ENCODE measurements at regions of chr6 and their contacts with region 1.

Region 1: DNA sequence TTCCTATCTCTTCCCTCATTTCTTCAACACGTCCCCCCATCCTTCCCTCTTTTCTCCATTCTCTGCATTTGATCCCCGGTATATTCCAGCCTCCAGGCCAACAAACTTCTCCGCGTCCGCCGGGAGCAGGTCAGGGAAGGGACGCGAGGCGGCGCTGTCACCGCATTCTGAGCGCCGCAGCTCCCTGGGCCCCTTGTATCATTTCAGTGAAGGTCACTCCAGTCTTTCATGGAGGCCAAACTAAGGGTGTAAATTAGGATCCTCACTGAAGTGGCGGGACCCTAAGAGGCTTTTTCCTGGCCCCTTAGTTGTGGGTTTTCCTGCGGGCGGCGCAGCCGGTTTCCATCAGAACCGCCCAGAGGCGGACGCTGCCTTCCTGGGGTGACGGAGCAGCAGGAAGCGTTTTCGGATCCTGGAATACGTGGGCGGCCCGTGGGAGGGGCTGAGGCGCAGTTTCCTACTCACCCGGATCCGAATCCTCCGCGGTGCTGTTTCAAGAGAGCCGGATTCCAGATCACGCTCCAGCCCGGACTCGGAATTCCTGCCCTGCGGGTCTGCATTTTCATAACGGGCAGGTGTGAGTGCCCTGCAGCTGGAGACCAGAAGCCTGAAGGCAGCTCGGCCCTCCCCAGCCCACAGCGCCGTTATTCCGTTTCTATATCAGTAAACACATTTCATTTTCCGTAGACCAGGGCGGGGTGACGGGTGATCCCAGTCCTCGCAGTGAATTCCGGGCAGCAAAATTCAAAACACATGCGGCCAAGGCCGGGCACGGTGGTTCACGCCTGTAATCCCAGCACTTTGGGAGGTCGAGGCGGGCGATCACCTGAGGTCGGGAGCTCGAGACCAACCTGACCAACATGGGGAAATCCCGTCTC is 3.6 kb upstream of the MICA start:
- DNase-seq: peak; percentile 85
- H3K27ac ChIP-seq: peak overlapping the region; percentile 95
- CTCF ChIP-seq: peak; percentile 96

Region 2: DNA sequence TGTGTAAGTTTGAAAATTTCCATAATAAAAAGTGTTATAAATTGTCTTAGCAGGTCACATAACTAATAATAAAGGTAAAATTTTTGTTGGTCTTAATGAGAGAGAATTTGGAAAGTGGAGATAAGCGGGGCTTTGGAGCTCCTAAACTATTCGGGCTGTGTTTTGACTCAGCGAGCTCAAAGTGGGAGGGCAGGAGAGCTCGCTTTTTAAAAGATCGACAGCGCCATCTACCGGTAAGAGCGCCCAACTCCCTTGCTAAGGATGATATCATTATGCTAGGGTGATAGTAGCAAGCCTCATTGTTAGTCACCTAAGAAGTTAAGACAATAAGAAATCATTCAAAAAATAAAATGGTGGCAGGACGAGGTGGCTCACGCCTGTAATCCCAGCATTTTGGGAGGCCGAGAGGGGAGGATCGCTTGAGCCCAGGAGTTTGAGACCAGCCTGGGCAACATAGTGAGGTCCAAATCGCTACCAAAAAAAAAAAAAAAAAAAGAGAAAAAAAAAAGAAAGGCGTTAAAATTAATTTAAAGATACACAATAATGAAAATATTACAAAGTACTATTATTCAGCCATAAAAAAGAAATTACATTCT is 312.2 kb before region 1 on chr6:
- CTCF ChIA-PET with region 1: no interaction called
- POLR2A ChIA-PET with region 1: no interaction called
- DNase-seq: peak; percentile 89
- H3K27ac ChIP-seq: no peak overlapping the region
- CTCF ChIP-seq: peak; percentile 76

Region 3: GRCh38 chr6:31441365-31442267 is 41.8 kb after region 1 on chr6:
- CTCF ChIA-PET with region 1: interaction called, 19 read pairs
- POLR2A ChIA-PET with region 1: no interaction called
- DNase-seq: peak; percentile 77
- H3K27ac ChIP-seq: no peak overlapping the region
- CTCF ChIP-seq: peak; percentile 86

Region 4: GRCh38 chr6:31663961-31664789 is 264.3 kb after region 1 on chr6:
- CTCF ChIA-PET with region 1: interaction called, 10 read pairs
- POLR2A ChIA-PET with region 1: no interaction called
- DNase-seq: peak; percentile 73
- H3K27ac ChIP-seq: peak overlapping the region; percentile 98
- CTCF ChIP-seq: no peak

Measured in RWPE1 (cell line).